ENCODE measurements at regions of chr22 and their contacts with region 1.

Region 1: GRCh38 chr22:37623075-37624016 is 14.7 kb downstream of the GGA1 start:
- DNase-seq: peak; percentile 63 to 84 (median 75)
- ATAC-seq: peak; percentile 91
- H3K4me3 ChIP-seq: no peak overlapping the region
- H3K4me3 Mint-ChIP-seq: peak overlapping the region in 9 of 10 donors; percentile 49 to 75 (median 60)
- H3K27ac ChIP-seq: peak overlapping the region; percentile 60
- H3K27ac Mint-ChIP-seq: peak overlapping the region; percentile 87 to 99 (median 94)
- H3K4me1 ChIP-seq: peaks cover 45 to 52% of the 10 kb centered on the region in 2 donors
- H3K4me1 Mint-ChIP-seq: peaks cover 28 to 53% (median 37%) of the 10 kb centered on the region in 7 donors
- H3K27me3 ChIP-seq: no peaks in the 10 kb centered on the region
- H3K27me3 Mint-ChIP-seq: no peaks in the 10 kb centered on the region

Region 2: DNA sequence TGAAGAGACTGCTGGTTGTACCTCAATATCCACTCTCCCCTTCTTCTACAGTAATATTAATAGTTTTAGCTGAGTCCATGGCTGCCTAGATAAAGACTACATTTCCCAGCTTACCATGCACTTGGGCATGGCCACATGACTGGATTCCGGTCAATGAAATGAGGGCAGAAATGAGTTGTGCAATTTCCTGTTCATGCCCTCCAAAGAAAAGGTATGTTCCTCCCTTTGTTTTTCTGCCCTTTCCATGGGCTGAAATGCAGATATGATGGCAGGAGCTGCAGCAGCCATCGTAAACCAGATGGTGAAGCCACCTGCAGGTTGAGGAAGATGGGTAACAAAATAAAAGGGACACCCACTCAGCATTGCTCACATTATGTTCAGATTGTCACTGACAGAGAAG is 180.8 kb before region 1 on chr22:
- CTCF ChIA-PET with region 1: no interaction called
- POLR2A ChIA-PET with region 1: no interaction called
- intact Hi-C with region 1: no loop called
- DNase-seq: no peak
- ATAC-seq: no peak
- H3K4me3 ChIP-seq: no peak overlapping the region
- H3K4me3 Mint-ChIP-seq: no peak overlapping the region
- H3K27ac ChIP-seq: no peak overlapping the region
- H3K27ac Mint-ChIP-seq: no peak overlapping the region
- H3K4me1 ChIP-seq: no peaks in the 10 kb centered on the region
- H3K4me1 Mint-ChIP-seq: peaks cover 0 to 3% (median 0%) of the 10 kb centered on the region in 7 donors
- H3K27me3 ChIP-seq: no peaks in the 10 kb centered on the region
- H3K27me3 Mint-ChIP-seq: peaks cover 0 to 12% (median 3%) of the 10 kb centered on the region in 5 donors

Region 3: DNA sequence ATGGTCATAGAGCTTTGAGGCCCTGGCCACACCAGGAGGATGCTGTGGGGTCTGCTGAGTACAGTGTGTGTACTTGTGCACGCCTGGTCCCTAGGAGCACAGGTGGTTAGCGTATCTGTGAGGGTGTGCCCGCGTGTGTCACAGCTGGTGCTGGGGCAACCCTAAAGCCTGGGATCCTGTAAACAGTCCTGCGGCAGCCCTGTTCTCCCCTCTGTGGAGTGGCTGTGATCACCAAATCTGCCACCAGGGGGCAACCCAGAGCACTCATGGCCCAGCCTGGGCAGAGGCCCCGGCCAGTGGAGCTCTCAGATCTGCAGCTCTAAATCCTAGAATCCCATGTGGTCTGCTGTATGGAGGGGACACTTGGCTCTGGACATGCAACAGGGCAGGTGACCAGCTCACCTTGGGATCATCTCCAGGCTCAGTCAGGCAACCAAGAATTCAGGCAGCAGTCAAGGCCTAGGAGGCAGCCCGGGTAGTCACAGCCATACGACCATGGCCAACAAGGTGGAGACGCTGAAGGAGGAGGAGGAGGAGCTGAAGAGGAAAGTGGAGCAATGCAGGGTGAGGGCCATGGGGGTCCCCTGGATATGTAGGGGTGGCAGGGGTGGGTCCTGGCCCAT is 20.0 kb after region 1 on chr22:
- CTCF ChIA-PET with region 1: interaction called, 292 read pairs
- POLR2A ChIA-PET with region 1: interaction called, 135 read pairs
- intact Hi-C with region 1: loop called (anchors 1 kb)
- DNase-seq: peak; percentile 65 to 90 (median 81)
- ATAC-seq: peak; percentile 83
- H3K4me3 ChIP-seq: peak overlapping the region; percentile 45
- H3K4me3 Mint-ChIP-seq: peak overlapping the region; percentile 29 to 75 (median 55)
- H3K27ac ChIP-seq: peak overlapping the region; percentile 24
- H3K27ac Mint-ChIP-seq: peak overlapping the region; percentile 51 to 89 (median 74)
- H3K4me1 ChIP-seq: peaks cover 34 to 39% of the 10 kb centered on the region in 2 donors
- H3K4me1 Mint-ChIP-seq: peaks cover 12 to 47% (median 30%) of the 10 kb centered on the region in 7 donors
- H3K27me3 ChIP-seq: no peaks in the 10 kb centered on the region
- H3K27me3 Mint-ChIP-seq: no peaks in the 10 kb centered on the region

Region 4: DNA sequence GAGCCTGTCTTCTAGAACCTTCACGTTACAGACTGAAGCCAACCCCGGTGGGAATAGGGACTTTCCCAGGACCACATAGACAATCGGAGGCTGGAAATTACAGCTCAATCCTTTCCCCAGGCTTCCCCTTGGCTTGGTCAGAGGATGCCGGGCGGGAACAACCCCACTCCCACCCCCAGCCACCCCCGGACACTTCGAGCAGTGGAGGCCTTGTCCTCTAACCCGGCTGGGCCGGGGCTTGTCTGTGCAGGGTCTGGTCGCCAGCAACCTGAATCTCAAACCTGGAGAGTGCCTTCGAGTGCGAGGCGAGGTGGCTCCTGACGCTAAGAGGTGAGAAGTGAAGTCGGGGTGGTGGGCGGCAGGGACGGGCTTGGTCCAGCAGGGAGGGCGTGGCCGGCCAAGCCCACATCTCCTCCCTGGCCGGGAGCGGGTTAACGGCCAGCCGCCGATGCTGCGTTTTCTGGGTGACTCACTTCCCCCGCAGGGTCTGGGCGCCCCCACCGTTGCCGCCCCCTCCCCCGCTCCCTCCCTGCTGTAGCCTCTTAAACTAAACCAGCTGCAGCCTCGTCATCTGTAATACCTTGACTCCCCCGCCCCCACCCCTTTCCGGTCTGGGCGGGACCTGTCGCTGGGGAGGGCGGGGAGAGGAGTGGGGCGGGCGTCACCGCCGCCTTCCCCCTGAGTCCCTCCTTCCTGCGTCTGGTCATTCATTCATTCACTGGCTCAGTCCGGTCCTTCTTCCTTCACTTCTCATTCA is 53.6 kb after region 1 on chr22:
- CTCF ChIA-PET with region 1: interaction called, 11 read pairs
- POLR2A ChIA-PET with region 1: interaction called, 27 read pairs
- intact Hi-C with region 1: loop called (anchors 1 kb)
- DNase-seq: peak; percentile 82 to 95 (median 94)
- ATAC-seq: peak; percentile 93
- H3K4me3 ChIP-seq: peak overlapping the region; percentile 60
- H3K4me3 Mint-ChIP-seq: peak overlapping the region; percentile 82 to 99 (median 91)
- H3K27ac ChIP-seq: peak overlapping the region; percentile 99
- H3K27ac Mint-ChIP-seq: peak overlapping the region; percentile 94 to 100 (median 100)
- H3K4me1 ChIP-seq: peaks cover 29 to 37% of the 10 kb centered on the region in 2 donors
- H3K4me1 Mint-ChIP-seq: peaks cover 14 to 68% (median 60%) of the 10 kb centered on the region in 7 donors
- H3K27me3 ChIP-seq: no peaks in the 10 kb centered on the region
- H3K27me3 Mint-ChIP-seq: no peaks in the 10 kb centered on the region

Region 5: DNA sequence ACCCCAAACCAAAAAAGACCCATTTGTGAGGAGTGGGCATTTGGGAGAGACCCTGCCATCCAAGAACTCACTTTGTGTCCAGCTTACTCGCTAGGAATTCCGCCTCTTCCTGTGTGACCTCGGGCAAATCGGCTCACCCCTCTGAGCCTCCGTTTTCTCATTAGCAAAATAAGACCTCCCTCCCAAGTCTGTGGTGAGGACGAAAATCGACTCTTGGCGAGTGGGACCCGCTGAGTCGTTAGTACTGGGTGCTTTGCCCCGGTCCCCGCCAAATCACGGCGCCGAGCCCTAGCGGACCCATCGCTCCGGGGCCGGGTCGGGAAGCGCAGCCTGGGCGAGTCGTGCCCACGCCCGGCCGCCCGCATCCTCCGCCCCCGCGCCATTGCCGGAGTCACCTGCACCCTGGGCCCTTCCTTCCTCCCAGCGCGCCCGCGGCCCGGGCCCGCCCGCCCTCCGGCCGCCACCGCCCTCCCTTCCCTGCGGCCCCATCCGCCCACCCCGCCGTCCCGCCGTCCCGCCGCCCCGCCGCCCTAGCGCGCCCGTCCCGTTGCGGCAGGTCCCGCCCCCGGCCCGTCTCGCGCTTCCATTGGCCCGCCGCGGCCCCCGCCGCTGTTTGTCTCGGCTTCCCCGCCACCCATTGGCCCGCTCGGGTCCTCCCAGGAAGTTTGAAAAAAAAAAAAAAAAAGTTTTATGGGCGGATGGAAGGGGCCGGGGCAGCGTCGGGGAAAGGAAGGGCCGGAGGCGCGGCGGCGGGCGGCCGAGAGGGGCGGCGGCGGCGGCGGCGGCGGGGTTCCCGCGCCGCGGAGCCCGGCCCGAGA is 122.4 kb after region 1 on chr22:
- CTCF ChIA-PET with region 1: no interaction called
- POLR2A ChIA-PET with region 1: no interaction called
- intact Hi-C with region 1: loop called in 1 of 2 experiments (anchors 5 kb)
- DNase-seq: peak; percentile 67 to 90 (median 78)
- ATAC-seq: peak; percentile 97
- H3K4me3 ChIP-seq: peak overlapping the region; percentile 74
- H3K4me3 Mint-ChIP-seq: peak overlapping the region; percentile 82 to 96 (median 92)
- H3K27ac ChIP-seq: peak overlapping the region; percentile 77
- H3K27ac Mint-ChIP-seq: peak overlapping the region; percentile 75 to 93 (median 87)
- H3K4me1 ChIP-seq: peaks cover 9 to 18% of the 10 kb centered on the region in 2 donors
- H3K4me1 Mint-ChIP-seq: peaks cover 13 to 36% (median 26%) of the 10 kb centered on the region in 7 donors
- H3K27me3 ChIP-seq: no peaks in the 10 kb centered on the region
- H3K27me3 Mint-ChIP-seq: no peaks in the 10 kb centered on the region

Region 6: DNA sequence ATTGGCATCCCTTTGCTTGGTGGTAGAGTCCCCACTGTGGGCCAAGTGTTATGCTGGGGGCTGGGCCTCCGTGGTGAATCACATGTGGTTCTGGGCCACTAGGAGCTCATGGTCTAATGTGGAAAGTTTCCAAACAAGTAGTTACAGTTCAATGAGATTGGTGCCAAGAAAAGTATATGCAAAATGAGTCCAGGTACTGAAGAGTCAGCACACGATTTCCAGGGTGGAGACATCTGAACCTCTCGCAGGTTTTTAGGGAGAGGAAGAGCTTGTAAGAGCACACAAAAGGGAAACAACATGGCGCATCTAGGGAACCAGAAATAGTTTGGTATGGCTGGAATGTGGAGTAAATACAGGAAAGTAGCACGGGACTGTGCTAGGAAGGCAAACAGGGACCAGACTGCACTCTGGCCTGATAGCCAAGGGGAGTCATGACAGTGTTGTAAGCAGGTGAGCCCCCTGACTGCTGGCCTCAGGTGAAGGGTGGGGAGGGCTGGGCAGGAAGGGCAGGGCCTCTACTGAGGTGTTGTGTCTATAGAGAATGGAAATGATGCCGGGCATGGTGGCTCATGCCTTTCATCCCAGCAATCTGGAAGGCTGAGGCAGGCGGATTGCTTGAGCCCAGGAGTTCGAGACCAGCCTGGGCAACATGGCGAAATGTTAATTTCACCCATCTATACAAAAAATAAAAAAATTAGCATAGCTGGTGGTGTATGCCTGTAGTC is 342.8 kb after region 1 on chr22:
- CTCF ChIA-PET with region 1: no interaction called
- POLR2A ChIA-PET with region 1: no interaction called
- intact Hi-C with region 1: loop called in 1 of 2 experiments (anchors 5 kb)
- DNase-seq: no peak
- ATAC-seq: no peak
- H3K4me3 ChIP-seq: no peak overlapping the region
- H3K4me3 Mint-ChIP-seq: no peak overlapping the region
- H3K27ac ChIP-seq: no peak overlapping the region
- H3K27ac Mint-ChIP-seq: no peak overlapping the region
- H3K4me1 ChIP-seq: no peaks in the 10 kb centered on the region
- H3K4me1 Mint-ChIP-seq: peaks cover 2 to 14% (median 5%) of the 10 kb centered on the region in 7 donors
- H3K27me3 ChIP-seq: no peaks in the 10 kb centered on the region
- H3K27me3 Mint-ChIP-seq: no peaks in the 10 kb centered on the region

Measured in naive thymus-derived CD4-positive, alpha-beta T cell (primary cell).